HepG2 (cell line): ENCODE measurements at regions of chr3 and their contacts with region 1.

Region 1: DNA sequence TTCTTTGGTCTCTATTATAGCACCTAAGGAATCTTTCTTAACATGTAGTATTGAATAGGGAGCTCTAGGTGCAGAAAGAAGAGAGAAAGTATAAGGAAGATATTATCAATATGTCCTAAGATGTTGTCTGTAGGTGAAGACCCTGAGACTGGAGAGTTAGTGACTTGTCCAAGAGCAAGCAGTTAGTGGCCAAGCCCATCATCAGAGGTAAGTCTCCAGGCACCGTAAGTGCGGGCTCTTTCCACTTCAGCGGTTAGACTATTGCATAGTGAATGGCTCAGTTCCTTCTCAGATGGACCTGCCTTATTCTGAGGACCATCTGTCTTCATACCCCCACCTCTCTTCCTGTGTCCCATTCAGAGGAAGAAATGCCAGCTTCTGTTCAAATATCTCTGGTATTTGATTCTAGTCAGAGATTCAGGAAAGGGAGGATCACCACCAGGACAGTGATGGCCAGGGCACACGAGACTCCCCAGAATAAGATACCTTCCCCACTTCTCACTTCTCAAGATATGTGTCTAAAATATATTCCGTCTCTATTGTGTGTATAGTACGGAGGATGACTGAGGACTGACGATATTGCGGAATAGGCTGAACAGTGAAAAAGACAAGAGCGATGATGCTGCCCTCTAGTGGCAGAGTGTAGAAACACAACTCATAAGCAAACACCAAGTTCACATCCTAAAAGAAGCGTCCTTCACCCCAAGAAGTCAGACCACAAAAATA is 19.1 kb upstream of the ADGRG7 start:
- DNase-seq: peak; percentile 66
- ATAC-seq: peak; percentile 90
- H3K4me3 ChIP-seq: no peak overlapping the region
- H3K27ac ChIP-seq: no peak overlapping the region
- H3K4me1 ChIP-seq: peaks cover 15% of the 10 kb centered on the region
- H3K27me3 ChIP-seq: peaks cover 0 to 1% of the 10 kb centered on the region in 2 experiments; a peak in 1 of 5 replicates
- CTCF ChIP-seq: peak; percentile 83
- EP300 ChIP-seq: no peak
- POLR2A ChIP-seq: no peak
- RAD21 ChIP-seq: peak; percentile 61

Region 2: GRCh38 chr3:99833617-99834205 is 756.6 kb before region 1 on chr3:
- CTCF ChIA-PET with region 1: interaction called, 4 read pairs
- POLR2A ChIA-PET with region 1: no interaction called
- in situ Hi-C with region 1: loop called (anchors 25 kb)
- intact Hi-C with region 1: loop called (anchors 5 kb)
- DNase-seq: no peak
- ATAC-seq: no peak
- H3K4me3 ChIP-seq: no peak overlapping the region
- H3K27ac ChIP-seq: no peak overlapping the region
- H3K4me1 ChIP-seq: peaks cover 28% of the 10 kb centered on the region
- H3K27me3 ChIP-seq: no peaks in the 10 kb centered on the region
- CTCF ChIP-seq: no peak
- EP300 ChIP-seq: no peak
- POLR2A ChIP-seq: no peak
- RAD21 ChIP-seq: no peak

Region 3: DNA sequence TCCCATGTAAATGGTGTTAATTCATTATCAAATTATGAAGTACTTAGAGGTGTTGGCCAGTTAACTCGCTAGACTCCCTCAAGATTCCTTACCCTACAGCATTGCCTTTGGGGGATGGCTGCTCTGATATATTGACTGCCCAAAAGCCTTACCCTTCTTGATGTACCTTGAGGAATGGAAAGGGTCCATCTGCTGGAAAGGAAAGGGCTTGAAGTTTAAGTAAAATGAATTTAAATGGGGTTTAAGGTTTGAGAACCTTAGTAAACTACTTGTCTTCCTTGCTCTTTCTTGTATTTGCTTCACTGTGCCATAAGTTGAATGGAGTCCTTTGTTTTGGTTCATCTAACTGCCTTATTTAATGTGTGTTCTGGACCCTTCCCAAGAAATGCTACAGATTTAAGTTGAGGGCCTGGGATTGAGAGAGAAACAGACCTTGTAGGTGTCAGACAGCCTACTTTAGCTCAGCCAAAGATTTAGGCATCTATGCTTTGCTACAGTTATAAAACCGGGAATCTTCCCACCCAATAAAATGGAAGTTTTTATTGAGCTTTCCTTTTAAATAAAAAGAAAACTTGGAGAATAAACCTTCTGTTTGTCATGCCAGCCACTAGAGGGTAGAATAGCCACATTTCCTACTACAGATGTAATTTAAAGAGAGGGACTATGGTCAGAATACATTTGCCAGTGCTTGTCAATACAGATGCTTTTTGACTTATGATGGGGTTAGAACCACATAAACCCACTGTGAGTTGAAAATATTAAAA is 747.3 kb before region 1 on chr3:
- CTCF ChIA-PET with region 1: no interaction called
- POLR2A ChIA-PET with region 1: no interaction called
- in situ Hi-C with region 1: loop called (anchors 25 kb)
- intact Hi-C with region 1: no loop called
- DNase-seq: peak; percentile 38
- ATAC-seq: peak; percentile 80
- H3K4me3 ChIP-seq: no peak overlapping the region
- H3K27ac ChIP-seq: no peak overlapping the region
- H3K4me1 ChIP-seq: peaks cover 37% of the 10 kb centered on the region
- H3K27me3 ChIP-seq: no peaks in the 10 kb centered on the region
- CTCF ChIP-seq: peak; percentile 70
- EP300 ChIP-seq: no peak
- POLR2A ChIP-seq: no peak
- RAD21 ChIP-seq: peak; percentile 55; the same call in 1 of the 2 replicates

Region 4: GRCh38 chr3:99999536-99999935 is 590.7 kb before region 1 on chr3:
- CTCF ChIA-PET with region 1: no interaction called
- POLR2A ChIA-PET with region 1: no interaction called
- in situ Hi-C with region 1: no loop called
- intact Hi-C with region 1: no loop called
- DNase-seq: no peak
- ATAC-seq: no peak
- H3K4me3 ChIP-seq: no peak overlapping the region
- H3K27ac ChIP-seq: no peak overlapping the region
- H3K4me1 ChIP-seq: peaks cover 34% of the 10 kb centered on the region
- H3K27me3 ChIP-seq: no peaks in the 10 kb centered on the region
- CTCF ChIP-seq: no peak
- EP300 ChIP-seq: no peak
- POLR2A ChIP-seq: no peak
- RAD21 ChIP-seq: no peak

Region 5: DNA sequence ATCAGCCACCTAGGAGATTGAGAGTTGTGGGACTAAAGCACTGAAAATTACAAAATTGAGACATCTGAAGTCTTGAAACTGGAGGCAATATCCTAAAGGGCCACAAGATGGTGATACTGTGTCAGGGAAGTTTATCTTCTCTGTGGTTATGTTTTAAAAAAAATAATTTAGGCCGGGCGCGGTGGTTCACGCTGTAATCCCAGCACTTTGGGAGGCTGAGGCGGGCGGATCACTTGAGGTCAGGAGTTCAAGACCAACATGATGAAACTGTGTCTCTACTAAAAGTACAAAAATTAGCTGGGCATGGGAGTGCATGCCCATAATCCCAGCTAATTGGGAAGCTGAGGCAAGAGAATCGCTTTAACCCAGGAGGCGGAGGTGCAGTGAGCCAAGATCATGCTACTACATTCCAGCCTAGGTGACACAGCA is 273.6 kb before region 1 on chr3:
- CTCF ChIA-PET with region 1: interaction called, 9 read pairs
- POLR2A ChIA-PET with region 1: no interaction called
- in situ Hi-C with region 1: loop called (anchors 10 kb)
- intact Hi-C with region 1: loop called (anchors 1 kb)
- DNase-seq: peak; percentile 39
- ATAC-seq: peak; percentile 72
- H3K4me3 ChIP-seq: no peak overlapping the region
- H3K27ac ChIP-seq: no peak overlapping the region
- H3K4me1 ChIP-seq: no peaks in the 10 kb centered on the region
- H3K27me3 ChIP-seq: no peaks in the 10 kb centered on the region
- CTCF ChIP-seq: peak; percentile 63
- EP300 ChIP-seq: no peak
- POLR2A ChIP-seq: no peak
- RAD21 ChIP-seq: peak; percentile 48; the same call in 1 of the 2 replicates